ENCODE measurements at regions of chr7 and their contacts with region 1.

Region 1: DNA sequence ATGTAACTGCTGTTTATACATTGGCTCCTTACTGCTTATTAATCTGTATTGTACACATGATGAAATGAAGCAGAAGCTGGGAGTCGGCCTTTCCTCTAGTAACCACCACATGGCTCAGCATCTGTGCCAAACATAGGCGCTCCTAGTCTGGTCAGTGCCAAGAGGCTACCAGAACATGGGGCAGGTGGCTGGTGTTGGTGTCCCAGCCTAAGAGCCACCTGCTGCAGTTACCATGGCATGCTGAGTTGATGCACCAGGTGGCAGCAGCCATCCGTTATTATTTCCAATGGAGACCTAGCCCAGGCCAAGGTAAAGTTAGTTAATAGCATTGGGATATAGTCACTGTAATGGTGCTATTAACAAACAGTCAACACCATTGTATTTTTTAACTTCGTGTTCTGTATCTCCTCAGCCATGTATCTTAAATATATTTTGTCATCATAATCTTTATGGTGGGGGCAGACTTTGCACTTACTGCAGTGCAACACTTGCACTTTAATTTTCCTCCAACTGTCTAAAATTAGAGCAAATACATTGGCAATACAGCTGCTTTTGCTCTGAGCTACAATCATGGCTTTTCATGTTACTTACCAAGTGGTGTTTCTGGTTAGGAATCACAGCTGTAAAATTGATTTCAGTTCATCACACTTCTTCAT is 33.1 kb downstream of the HBP1 start:
- DNase-seq: peak; percentile 23
- ATAC-seq: peak; percentile 98
- H3K4me3 ChIP-seq: no peak overlapping the region
- H3K27ac ChIP-seq: no peak overlapping the region
- H3K4me1 ChIP-seq: no peaks in the 10 kb centered on the region
- H3K27me3 ChIP-seq: no peaks in the 10 kb centered on the region
- CTCF ChIP-seq: peak; percentile 41 to 72 (median 69); a peak in 5 of 6 replicates
- POLR2A ChIP-seq: no peak
- RAD21 ChIP-seq: peak; percentile 70

Region 2: GRCh38 chr7:107355616-107356015 is 153.7 kb after region 1 on chr7:
- CTCF ChIA-PET with region 1: no interaction called
- POLR2A ChIA-PET with region 1: no interaction called
- RAD21 ChIA-PET with region 1: no interaction called
- intact Hi-C with region 1: no loop called
- DNase-seq: no peak
- ATAC-seq: no peak
- H3K4me3 ChIP-seq: no peak overlapping the region
- H3K27ac ChIP-seq: no peak overlapping the region
- H3K4me1 ChIP-seq: no peaks in the 10 kb centered on the region
- H3K27me3 ChIP-seq: no peaks in the 10 kb centered on the region
- CTCF ChIP-seq: no peak
- POLR2A ChIP-seq: no peak
- RAD21 ChIP-seq: no peak

Region 3: GRCh38 chr7:107446531-107446930 is 244.6 kb after region 1 on chr7:
- CTCF ChIA-PET with region 1: no interaction called
- POLR2A ChIA-PET with region 1: no interaction called
- RAD21 ChIA-PET with region 1: no interaction called
- intact Hi-C with region 1: no loop called
- DNase-seq: no peak
- ATAC-seq: no peak
- H3K4me3 ChIP-seq: no peak overlapping the region
- H3K27ac ChIP-seq: no peak overlapping the region
- H3K4me1 ChIP-seq: peaks cover 0 to 12% of the 10 kb centered on the region in 2 experiments; a peak in 2 of 4 replicates
- H3K27me3 ChIP-seq: no peaks in the 10 kb centered on the region
- CTCF ChIP-seq: no peak
- POLR2A ChIP-seq: no peak
- RAD21 ChIP-seq: no peak

Region 4: DNA sequence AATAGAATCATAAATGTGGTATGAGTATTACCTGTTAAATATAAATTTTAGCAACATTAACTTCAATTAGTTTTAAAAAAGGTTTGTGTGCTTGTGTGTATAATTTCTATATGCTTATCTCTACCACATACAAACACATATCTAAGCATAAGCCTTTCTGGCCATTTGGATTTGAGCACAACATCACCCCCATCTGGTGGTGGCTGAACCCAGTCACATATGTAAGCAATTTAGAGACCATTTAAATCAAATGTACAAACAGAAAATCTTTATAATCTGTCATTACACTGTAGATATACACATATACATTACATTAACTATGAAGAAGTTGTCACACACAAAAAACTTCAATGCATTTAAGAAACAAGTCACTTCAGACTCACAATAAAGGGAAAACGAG is 299.7 kb after region 1 on chr7:
- CTCF ChIA-PET with region 1: interaction called, 5 read pairs
- POLR2A ChIA-PET with region 1: no interaction called
- RAD21 ChIA-PET with region 1: no interaction called
- intact Hi-C with region 1: loop called (anchors 2 kb)
- DNase-seq: peak; percentile 26
- ATAC-seq: peak; percentile 77
- H3K4me3 ChIP-seq: no peak overlapping the region
- H3K27ac ChIP-seq: no peak overlapping the region
- H3K4me1 ChIP-seq: peaks cover 10 to 13% of the 10 kb centered on the region in 2 experiments; a peak in 3 of 4 replicates
- H3K27me3 ChIP-seq: no peaks in the 10 kb centered on the region
- CTCF ChIP-seq: peak; percentile 31 to 62 (median 56); a peak in 5 of 6 replicates
- POLR2A ChIP-seq: no peak
- RAD21 ChIP-seq: peak; percentile 52

Measured in HCT116 (cell line).